ENCODE measurements at regions of chr2 and their contacts with region 1.

Region 1: GRCh38 chr2:78979380-78980151 is 45.9 kb upstream of the REG3G start:
- DNase-seq: peak; percentile 42 to 60 (median 57)
- ATAC-seq: peak; percentile 75
- H3K4me3 ChIP-seq: no peak overlapping the region
- H3K27ac ChIP-seq: no peak overlapping the region
- H3K4me1 ChIP-seq: no peaks in the 10 kb centered on the region
- H3K27me3 ChIP-seq: no peaks in the 10 kb centered on the region
- CTCF ChIP-seq: peak; percentile 60 to 74 (median 72)
- EP300 ChIP-seq: no peak
- POLR2A ChIP-seq: no peak
- RAD21 ChIP-seq: peak; percentile 68 to 76

Region 2: GRCh38 chr2:78676921-78677696 is 302.5 kb before region 1 on chr2:
- CTCF ChIA-PET with region 1: no interaction called
- POLR2A ChIA-PET with region 1: no interaction called
- in situ Hi-C with region 1: no loop called
- intact Hi-C with region 1: loop called (anchors 10 kb)
- DNase-seq: peak in 1 of 4 experiments; percentile 19
- ATAC-seq: peak; percentile 48; the same call in 1 of the 3 replicates
- H3K4me3 ChIP-seq: no peak overlapping the region
- H3K27ac ChIP-seq: no peak overlapping the region
- H3K4me1 ChIP-seq: no peaks in the 10 kb centered on the region
- H3K27me3 ChIP-seq: no peaks in the 10 kb centered on the region
- CTCF ChIP-seq: no peak
- EP300 ChIP-seq: no peak
- POLR2A ChIP-seq: no peak
- RAD21 ChIP-seq: no peak

Measured in K562 (cell line).